Caco-2 (cell line): ENCODE measurements at regions of chr17 and their contacts with region 1.

Region 1: GRCh38 chr17:17496189-17497064 is at the start of gene RASD1:
- DNase-seq: peak; percentile 88 to 96
- H3K4me3 ChIP-seq: peak within 1 kb of the TSS; percentile 91
- H3K4me3 Mint-ChIP-seq: peak within 1 kb of the TSS; percentile 92
- H3K27ac Mint-ChIP-seq: peak within 1 kb of the TSS; percentile 74
- H3K4me1 ChIP-seq: peaks cover 4% of the 10 kb centered on the region; the same call in 1 of the 2 replicates
- H3K4me1 Mint-ChIP-seq: peaks cover 12% of the 10 kb centered on the region
- H3K27me3 ChIP-seq: no peaks in the 10 kb centered on the region
- H3K27me3 Mint-ChIP-seq: no peaks in the 10 kb centered on the region
- CTCF ChIP-seq: peak; percentile 56 to 94
- total RNA-seq, gene RASD1: 11.0 and 14.8 TPM in 2 replicates

Region 2: GRCh38 chr17:17258998-17259397 is 237.4 kb before region 1 on chr17:
- CTCF ChIA-PET with region 1: no interaction called
- POLR2A ChIA-PET with region 1: no interaction called
- intact Hi-C with region 1: no loop called
- DNase-seq: no peak
- H3K4me3 ChIP-seq: no peak overlapping the region
- H3K4me3 Mint-ChIP-seq: no peak overlapping the region
- H3K27ac Mint-ChIP-seq: no peak overlapping the region
- H3K4me1 ChIP-seq: no peaks in the 10 kb centered on the region
- H3K4me1 Mint-ChIP-seq: no peaks in the 10 kb centered on the region
- H3K27me3 ChIP-seq: no peaks in the 10 kb centered on the region
- H3K27me3 Mint-ChIP-seq: no peaks in the 10 kb centered on the region
- CTCF ChIP-seq: no peak

Region 3: DNA sequence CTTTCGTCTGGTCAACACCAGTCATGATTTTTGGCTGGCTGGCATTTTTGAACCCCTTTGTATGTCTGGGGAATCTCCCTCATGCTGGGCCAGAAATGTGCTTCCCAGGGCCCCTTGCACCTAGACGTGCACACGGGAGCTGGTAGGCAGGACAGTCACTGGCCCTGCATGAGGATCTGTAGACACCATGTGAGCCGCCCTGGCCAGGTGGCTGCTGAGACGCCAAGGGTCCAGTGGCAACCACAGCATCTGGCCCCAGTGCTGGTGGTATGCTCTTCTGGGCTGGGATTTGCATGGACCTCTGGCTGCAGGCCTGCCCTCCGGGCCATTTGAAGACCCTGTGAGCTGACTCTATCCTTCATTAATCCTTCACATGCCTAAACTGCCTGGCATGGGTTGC is 125.7 kb before region 1 on chr17:
- CTCF ChIA-PET with region 1: interaction called, 12 read pairs
- POLR2A ChIA-PET with region 1: interaction called, 5 read pairs
- intact Hi-C with region 1: no loop called
- DNase-seq: no peak
- H3K4me3 ChIP-seq: no peak overlapping the region
- H3K4me3 Mint-ChIP-seq: peak overlapping the region; percentile 35
- H3K27ac Mint-ChIP-seq: peak overlapping the region; percentile 93
- H3K4me1 ChIP-seq: peaks cover 42% of the 10 kb centered on the region
- H3K4me1 Mint-ChIP-seq: peaks cover 38% of the 10 kb centered on the region
- H3K27me3 ChIP-seq: no peaks in the 10 kb centered on the region
- H3K27me3 Mint-ChIP-seq: no peaks in the 10 kb centered on the region
- CTCF ChIP-seq: no peak

Region 4: DNA sequence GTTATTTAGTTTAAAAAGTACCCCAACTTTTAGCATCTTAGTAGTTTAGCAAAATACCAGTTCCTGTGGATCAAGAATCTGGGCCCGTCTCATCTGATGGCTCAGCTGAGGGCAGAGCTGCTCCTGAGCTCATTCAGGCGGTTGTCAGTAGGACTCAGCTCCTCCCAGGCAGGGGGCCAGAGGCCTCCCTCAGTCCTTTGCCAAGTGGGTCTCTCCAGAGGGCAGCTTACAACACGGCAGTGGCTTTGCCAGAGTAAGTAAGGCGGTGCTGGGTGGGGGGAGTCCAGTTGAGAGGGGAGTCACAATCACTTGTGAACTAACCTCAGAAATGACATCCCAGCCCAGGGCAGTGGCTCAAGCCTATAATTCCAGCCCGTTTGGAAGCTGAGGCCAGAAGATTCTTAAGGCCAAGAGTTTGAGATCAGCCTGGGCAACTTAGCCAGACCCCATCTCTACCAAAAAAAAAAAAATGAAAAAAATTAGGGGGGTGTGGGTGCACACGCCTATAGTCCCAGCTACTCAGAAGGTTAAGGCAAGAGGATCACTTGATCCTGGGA is 101.1 kb before region 1 on chr17:
- CTCF ChIA-PET with region 1: no interaction called
- POLR2A ChIA-PET with region 1: no interaction called
- intact Hi-C with region 1: no loop called
- DNase-seq: no peak
- H3K4me3 ChIP-seq: no peak overlapping the region
- H3K4me3 Mint-ChIP-seq: no peak overlapping the region
- H3K27ac Mint-ChIP-seq: no peak overlapping the region
- H3K4me1 ChIP-seq: no peaks in the 10 kb centered on the region
- H3K4me1 Mint-ChIP-seq: no peaks in the 10 kb centered on the region
- H3K27me3 ChIP-seq: no peaks in the 10 kb centered on the region
- H3K27me3 Mint-ChIP-seq: no peaks in the 10 kb centered on the region
- CTCF ChIP-seq: no peak

Region 5: DNA sequence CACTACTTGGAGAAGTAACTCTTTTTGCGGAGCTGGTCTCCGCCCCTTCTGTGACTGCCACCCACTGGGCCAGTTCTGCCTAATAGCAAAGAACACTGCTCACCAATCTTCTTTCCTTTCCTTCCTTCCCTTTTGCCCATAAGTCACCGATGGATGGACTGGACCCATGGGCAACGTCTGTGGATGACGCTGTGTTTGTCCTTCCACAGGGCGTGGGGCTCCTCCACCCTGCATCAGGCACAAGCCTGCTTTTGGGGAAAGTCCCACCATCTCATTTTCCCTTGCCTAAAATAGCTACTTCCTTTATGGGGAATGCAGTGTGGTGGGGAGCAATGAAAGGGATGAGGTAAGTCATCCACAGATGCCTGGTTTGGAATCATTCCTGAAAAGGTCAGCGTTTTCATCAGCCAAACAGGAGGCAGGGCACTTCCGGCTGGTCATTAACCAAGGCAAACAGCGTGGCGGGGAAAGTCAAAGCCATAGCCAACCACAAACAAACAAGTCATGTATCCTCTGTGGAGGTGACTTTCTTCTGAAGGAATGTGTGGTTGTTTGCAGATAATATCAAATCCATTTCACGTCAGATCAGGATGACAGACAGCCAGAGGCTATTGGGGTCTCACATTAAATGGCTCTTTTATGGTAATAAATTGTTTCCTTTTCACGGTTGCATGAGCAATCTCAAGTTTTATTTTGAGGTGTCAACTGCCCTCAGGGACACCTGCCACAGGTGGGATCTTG is 50.3 kb before region 1 on chr17:
- CTCF ChIA-PET with region 1: interaction called, 5 read pairs
- POLR2A ChIA-PET with region 1: interaction called, 5 read pairs
- intact Hi-C with region 1: loop called (anchors 2 kb)
- DNase-seq: peak; percentile 84 to 85
- H3K4me3 ChIP-seq: no peak overlapping the region
- H3K4me3 Mint-ChIP-seq: peak overlapping the region; percentile 49
- H3K27ac Mint-ChIP-seq: peak overlapping the region; percentile 84
- H3K4me1 ChIP-seq: peaks cover 43% of the 10 kb centered on the region
- H3K4me1 Mint-ChIP-seq: peaks cover 32% of the 10 kb centered on the region
- H3K27me3 ChIP-seq: no peaks in the 10 kb centered on the region
- H3K27me3 Mint-ChIP-seq: no peaks in the 10 kb centered on the region
- CTCF ChIP-seq: no peak

Region 6: DNA sequence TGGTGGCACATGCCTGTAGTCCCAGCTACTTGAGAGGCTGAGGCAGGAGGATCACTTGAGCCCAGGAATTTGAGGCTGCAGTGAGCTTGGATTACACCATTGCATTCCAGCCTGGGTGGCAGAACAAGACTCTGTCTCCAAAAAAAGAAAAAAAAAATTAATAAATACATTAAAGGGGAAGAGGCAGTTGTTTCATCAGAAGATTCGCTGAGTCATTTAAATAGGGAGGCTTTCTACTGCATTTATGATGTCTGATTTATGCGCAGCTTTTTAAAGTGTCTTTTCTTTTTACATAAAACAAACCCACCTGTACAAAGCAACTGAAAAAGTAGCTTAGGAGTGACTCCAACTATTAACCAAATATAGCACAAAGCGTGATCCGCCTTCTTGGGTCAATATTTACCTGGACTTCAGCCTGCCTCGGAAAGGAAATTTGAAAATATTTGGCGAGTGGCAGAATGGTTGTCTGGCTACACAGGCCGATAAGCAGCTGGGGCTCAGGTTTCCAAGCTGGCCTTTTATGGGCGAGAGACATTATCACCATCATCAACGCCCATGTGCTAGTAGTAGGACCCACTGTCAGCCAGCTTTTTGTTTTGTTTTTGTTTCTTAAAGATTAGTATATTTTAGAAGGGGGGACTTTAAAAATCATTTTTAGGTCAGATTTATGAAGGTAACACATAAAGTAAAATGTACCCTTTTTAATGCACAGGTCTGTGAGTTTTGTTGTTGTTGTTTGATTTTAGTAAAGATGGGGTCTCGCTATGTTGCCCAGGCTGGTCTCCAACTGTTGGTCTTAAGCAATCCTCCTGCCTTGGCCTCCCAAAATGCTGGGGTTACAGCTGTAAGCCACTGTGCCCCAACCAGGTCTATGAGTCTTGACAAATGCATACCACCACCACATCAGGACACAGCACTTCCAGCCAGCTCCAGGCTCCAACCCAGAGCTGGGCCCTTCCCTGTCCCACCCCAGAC is 42.3 kb after region 1 on chr17:
- CTCF ChIA-PET with region 1: interaction called, 33 read pairs
- POLR2A ChIA-PET with region 1: interaction called, 38 read pairs
- intact Hi-C with region 1: loop called (anchors 1 kb)
- DNase-seq: peak; percentile 92
- H3K4me3 ChIP-seq: no peak overlapping the region
- H3K4me3 Mint-ChIP-seq: peak overlapping the region; percentile 27
- H3K27ac Mint-ChIP-seq: peak overlapping the region; percentile 90
- H3K4me1 ChIP-seq: peaks cover 42% of the 10 kb centered on the region
- H3K4me1 Mint-ChIP-seq: peaks cover 19% of the 10 kb centered on the region
- H3K27me3 ChIP-seq: no peaks in the 10 kb centered on the region
- H3K27me3 Mint-ChIP-seq: no peaks in the 10 kb centered on the region
- CTCF ChIP-seq: no peak

Region 7: DNA sequence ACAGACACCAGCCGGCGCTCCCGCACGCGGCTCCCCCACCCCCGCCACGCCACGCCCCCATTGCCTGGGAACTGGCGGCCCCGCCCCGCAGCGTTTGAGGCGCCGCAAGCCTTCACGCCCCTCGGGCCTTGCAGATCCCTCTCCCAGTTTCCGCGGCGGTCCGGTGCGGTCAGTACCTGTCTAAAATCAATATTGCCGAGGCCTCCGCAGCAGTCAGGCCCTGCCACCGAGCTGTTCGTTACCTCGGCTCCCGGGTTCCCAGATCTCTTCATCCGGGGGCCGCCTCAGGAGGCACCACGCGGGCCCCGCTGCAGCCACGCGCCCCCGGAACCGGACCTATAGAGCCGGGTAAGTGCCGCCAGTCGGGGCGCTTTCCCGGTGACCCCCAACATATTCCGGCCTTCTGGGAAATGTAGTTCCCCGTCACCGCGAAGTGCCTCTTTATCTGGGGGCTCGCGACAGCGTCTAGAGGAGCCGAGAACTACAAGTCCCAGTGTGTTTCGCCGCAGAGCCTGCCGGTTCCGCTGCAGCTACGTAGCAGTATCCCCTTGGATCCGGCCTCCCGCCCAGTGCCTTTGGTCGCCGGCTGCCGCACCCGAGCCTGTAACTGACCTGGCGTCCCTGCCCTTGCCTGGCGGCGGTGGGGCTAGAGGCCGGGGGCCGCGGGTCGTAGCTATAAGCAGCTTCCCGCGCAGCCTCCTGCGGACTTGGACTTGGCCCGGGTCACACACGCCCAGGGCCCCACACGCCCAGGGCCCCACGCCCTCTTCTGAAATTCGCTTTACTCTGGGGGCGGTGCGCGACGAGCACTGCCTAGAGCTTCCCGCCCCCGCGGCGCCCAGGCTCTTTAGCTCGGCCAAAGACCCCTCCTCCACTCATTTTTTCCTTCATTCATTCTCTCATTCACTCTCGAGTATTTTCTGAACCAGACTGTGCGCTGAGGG is 95.2 kb after region 1 on chr17 and contains the start of gene PEMT:
- CTCF ChIA-PET with region 1: interaction called, 12 read pairs
- POLR2A ChIA-PET with region 1: interaction called, 22 read pairs
- intact Hi-C with region 1: no loop called
- DNase-seq: peak; percentile 96 to 99
- H3K4me3 ChIP-seq: peak within 1 kb of the TSS; percentile 51
- H3K4me3 Mint-ChIP-seq: peak within 1 kb of the TSS; percentile 94
- H3K27ac Mint-ChIP-seq: peak within 1 kb of the TSS; percentile 85
- H3K4me1 ChIP-seq: peaks cover 14% of the 10 kb centered on the region
- H3K4me1 Mint-ChIP-seq: peaks cover 19% of the 10 kb centered on the region
- H3K27me3 ChIP-seq: no peaks in the 10 kb centered on the region
- H3K27me3 Mint-ChIP-seq: no peaks in the 10 kb centered on the region
- CTCF ChIP-seq: no peak
- total RNA-seq, gene PEMT: 29.5 and 32.1 TPM in 2 replicates

Region 8: DNA sequence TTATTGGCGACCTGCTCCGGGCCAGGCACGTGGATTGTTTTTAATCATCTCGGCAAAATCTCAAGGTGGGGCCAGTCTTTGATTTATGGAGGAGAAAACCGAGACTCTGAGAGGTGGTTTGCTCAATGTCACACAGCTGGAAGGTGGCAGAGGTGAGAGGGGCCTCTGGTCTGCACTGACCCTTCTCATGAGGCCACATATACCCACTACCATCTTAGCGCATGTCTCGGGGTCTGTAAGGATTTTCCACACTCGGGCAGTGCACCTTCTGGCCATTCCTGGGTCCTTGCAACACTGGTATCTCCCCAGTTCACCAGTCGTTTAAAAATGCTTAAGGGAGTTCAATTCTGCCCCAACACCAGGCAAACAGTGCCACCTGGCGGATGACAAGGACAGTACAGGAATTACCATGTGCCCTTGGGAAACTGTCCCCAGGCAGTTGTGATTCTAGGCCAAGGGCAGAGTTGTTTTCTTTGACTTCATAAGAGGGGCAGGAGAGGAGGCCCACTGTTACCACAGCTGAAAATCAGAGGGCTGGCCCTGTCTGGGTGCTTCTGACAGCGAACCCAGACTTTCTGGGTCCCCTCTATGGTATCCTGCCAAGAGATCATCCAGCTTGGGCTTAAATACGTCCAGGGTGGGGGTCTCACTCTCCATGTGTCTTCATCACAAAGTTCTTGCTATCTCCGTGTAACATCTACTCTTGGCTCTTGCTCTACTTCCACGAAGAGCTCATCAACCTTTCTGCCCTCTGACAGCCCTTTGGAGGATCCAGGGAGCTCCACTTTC is 145.4 kb after region 1 on chr17:
- CTCF ChIA-PET with region 1: interaction called, 23 read pairs
- POLR2A ChIA-PET with region 1: interaction called, 6 read pairs
- intact Hi-C with region 1: loop called (anchors 1 kb)
- DNase-seq: peak; percentile 79 to 85
- H3K4me3 ChIP-seq: no peak overlapping the region
- H3K4me3 Mint-ChIP-seq: no peak overlapping the region
- H3K27ac Mint-ChIP-seq: no peak overlapping the region
- H3K4me1 ChIP-seq: no peaks in the 10 kb centered on the region
- H3K4me1 Mint-ChIP-seq: peaks cover 3% of the 10 kb centered on the region
- H3K27me3 ChIP-seq: no peaks in the 10 kb centered on the region; the same call in 1 of the 2 replicates
- H3K27me3 Mint-ChIP-seq: no peaks in the 10 kb centered on the region
- CTCF ChIP-seq: peak; percentile 94 to 95